ENCODE measurements at regions of chr17 and their contacts with region 1.

Region 1: DNA sequence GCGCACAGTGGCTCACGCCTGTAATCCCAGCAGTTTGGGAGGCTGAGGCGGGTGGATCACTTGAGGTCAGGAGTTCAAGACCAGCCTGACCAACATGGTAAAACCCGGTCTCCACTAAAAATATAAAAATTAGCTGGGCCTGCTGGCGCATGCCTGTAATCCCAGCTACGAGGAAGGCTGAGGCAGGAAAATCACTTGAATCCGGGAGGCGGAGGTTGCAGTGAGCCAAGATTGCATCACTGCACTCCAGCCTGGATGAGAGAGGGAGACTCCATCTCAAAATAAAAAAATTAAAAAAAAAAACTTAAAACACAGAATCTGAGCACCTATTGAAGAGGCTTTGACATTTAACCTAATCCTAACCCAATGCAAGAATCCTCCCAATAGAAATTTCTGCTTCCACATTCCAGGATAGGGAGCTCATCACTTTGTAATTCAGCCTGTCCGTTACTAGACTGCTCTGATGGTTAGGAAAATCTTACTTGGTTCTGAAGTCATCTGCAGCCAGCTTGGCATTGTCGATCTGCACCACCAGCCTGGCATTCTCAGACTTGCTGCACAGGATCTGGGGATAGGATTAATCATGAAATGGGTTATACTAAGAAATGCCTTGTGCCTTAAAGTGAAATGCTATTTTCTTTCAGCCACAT is 2.1 kb downstream of the KRT33B start:
- DNase-seq: no peak
- ATAC-seq: no peak
- H3K4me3 Mint-ChIP-seq: no peak overlapping the region
- H3K27ac Mint-ChIP-seq: no peak overlapping the region
- H3K4me1 Mint-ChIP-seq: peaks cover 2% of the 10 kb centered on the region
- H3K27me3 Mint-ChIP-seq: no peaks in the 10 kb centered on the region

Region 2: DNA sequence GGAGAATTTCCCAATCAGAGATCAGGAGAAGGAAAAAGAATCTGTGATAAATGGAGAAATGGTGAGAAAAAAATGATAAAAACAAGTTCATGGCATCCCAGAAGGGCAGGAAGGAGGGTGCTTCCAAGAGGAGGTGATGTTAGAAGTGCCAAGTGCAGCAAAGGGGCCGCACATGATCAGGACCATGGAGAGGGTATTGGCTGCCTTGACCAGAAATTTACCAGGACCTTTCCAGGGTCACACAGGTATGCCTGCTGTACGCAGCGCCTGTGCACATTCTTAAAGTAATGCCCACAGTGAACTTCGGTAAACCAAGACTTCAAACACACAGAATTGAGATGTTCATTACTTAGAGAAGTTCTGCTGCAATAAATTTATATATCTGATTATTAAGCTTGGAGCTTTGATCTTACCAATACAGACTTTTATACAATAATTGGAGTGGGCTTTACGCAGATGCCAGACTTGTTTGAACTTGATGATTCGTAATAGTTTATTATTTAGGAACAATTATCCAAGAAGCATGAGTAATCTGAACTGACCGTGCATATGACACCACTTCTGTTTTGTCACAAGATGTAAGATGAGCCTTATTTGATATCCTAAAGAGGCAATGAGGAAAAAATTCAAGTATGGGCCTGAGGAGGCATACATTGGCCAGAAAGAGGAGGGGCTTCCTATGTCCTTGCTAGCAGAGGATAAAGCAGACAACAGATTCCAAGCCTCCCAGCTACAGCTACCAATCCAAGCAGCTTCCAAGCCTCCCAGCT is 14.8 kb before region 1 on chr17:
- CTCF ChIA-PET with region 1: interaction called, 22 read pairs
- POLR2A ChIA-PET with region 1: interaction called, 3 read pairs
- intact Hi-C with region 1: loop called (anchors 1 kb)
- DNase-seq: no peak
- ATAC-seq: no peak
- H3K4me3 Mint-ChIP-seq: no peak overlapping the region
- H3K27ac Mint-ChIP-seq: no peak overlapping the region
- H3K4me1 Mint-ChIP-seq: peaks cover 5% of the 10 kb centered on the region
- H3K27me3 Mint-ChIP-seq: no peaks in the 10 kb centered on the region

Measured in activated CD4-positive, alpha-beta T cell treated with anti-CD3 and anti-CD28 coated beads for 36 hours (primary cell).